ENCODE measurements at regions of chr1 and their contacts with region 1.

Region 1: DNA sequence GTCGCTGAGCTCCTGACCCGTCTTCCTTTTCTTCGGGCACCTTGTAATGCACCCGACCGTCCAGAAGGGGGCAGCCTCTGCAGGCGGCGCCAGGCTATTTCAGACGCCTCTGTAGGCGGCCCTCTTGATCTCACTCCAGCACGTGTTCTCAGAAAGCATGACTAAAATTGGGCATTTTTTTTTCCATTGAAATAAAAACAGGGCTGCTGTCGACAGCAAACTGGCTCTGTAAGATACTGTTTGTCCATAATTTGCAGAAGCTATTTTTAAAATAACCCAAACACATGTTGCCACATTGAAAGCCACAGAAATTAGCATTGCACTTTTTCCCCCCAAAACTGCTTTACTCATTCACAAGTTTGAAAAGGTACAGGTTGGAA is 78.0 kb downstream of the STUM start:
- DNase-seq: peak; percentile 83
- ATAC-seq: peak; percentile 91
- H3K4me3 Mint-ChIP-seq: no peak overlapping the region
- H3K27ac Mint-ChIP-seq: no peak overlapping the region
- H3K4me1 Mint-ChIP-seq: peaks cover 11% of the 10 kb centered on the region
- H3K27me3 Mint-ChIP-seq: peaks cover 1% of the 10 kb centered on the region

Region 2: GRCh38 chr1:226679853-226680516 is 53.4 kb after region 1 on chr1:
- CTCF ChIA-PET with region 1: interaction called, 10 read pairs
- POLR2A ChIA-PET with region 1: no interaction called
- DNase-seq: peak; percentile 82
- ATAC-seq: peak; percentile 31
- H3K4me3 Mint-ChIP-seq: peak overlapping the region; percentile 67
- H3K27ac Mint-ChIP-seq: peak overlapping the region; percentile 86
- H3K4me1 Mint-ChIP-seq: peaks cover 88% of the 10 kb centered on the region
- H3K27me3 Mint-ChIP-seq: no peaks in the 10 kb centered on the region

Region 3: GRCh38 chr1:226731257-226731893 is 104.8 kb after region 1 on chr1:
- CTCF ChIA-PET with region 1: interaction called, 14 read pairs
- POLR2A ChIA-PET with region 1: no interaction called
- DNase-seq: no peak
- ATAC-seq: no peak
- H3K4me3 Mint-ChIP-seq: peak overlapping the region; percentile 91
- H3K27ac Mint-ChIP-seq: peak overlapping the region; percentile 90
- H3K4me1 Mint-ChIP-seq: peaks cover 95% of the 10 kb centered on the region
- H3K27me3 Mint-ChIP-seq: no peaks in the 10 kb centered on the region

Region 4: DNA sequence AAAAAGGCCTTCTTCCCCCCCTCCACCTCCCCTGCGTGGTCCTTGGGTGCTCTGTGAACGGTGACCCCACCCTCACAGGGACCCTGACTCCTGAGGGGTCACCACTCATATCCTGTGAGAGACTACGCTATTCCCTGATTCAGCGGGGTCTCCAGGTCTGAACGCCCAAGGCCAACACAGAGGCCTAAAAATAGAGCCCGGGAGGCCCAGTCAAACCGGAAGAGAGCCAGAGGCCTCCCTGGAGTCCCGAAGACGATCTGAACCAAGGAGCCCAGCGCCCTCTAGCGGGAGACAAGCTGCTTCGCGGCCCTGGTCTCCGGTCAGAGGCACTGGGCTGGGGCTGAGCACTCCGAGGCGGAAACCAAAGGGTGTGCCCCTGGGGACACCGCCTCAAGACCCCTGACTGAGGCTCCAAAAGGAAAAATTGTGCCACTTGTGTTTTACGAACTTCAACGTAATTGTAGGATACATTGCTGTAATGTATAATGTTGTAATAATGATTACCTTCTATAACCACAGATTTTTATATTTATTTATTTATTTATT is 201.5 kb after region 1 on chr1:
- CTCF ChIA-PET with region 1: interaction called, 25 read pairs
- POLR2A ChIA-PET with region 1: no interaction called
- DNase-seq: peak; percentile 97
- ATAC-seq: peak; percentile 100
- H3K4me3 Mint-ChIP-seq: peak overlapping the region; percentile 32
- H3K27ac Mint-ChIP-seq: peak overlapping the region; percentile 91
- H3K4me1 Mint-ChIP-seq: peaks cover 14% of the 10 kb centered on the region
- H3K27me3 Mint-ChIP-seq: peaks cover 3% of the 10 kb centered on the region

Region 5: GRCh38 chr1:226882631-226883409 is 256.3 kb after region 1 on chr1:
- CTCF ChIA-PET with region 1: interaction called, 16 read pairs
- POLR2A ChIA-PET with region 1: interaction called, 3 read pairs
- DNase-seq: peak; percentile 52
- ATAC-seq: peak; percentile 85
- H3K4me3 Mint-ChIP-seq: peak overlapping the region; percentile 51
- H3K27ac Mint-ChIP-seq: peak overlapping the region; percentile 86
- H3K4me1 Mint-ChIP-seq: peaks cover 46% of the 10 kb centered on the region
- H3K27me3 Mint-ChIP-seq: no peaks in the 10 kb centered on the region

Measured in activated CD8-positive, alpha-beta T cell treated with anti-CD3 and anti-CD28 coated beads, Interleukin-2, amount 10 ng/mL, durations not matched to agents 7 days and 5 days (primary cell).